MCF 10A (cell line): ENCODE measurements at regions of chr14 and their contacts with region 1.

Region 1: DNA sequence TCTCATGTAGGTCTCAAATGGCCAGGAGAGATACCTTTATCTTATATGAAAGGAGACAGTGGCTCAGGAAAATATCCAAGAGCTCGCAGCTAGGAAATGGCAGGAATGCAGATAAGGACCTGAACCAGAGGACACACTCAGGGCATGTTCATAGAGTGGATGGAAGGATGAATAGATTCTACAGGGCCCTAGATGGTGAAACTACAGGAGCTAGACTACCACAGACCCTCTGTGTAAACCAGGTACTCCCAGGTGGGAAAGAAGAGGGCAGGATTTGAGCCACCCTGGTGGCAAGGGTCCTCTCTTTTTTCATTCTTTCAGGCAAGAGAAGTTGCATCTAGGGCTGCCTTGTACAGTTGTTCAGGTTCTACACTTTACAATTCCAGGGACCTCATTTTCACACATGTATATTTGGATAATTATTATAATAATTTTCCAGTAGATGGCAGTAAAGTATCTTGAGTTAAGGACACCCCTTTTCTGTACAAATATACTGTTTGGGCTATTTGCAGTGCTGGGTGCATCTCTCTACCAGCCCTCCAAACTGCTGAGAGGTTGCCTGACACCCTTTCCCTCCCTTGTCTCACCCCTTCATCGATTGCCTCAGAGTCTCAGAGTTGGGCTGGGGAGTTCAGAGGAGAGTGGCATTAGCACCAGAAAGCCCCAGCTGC is 10.5 kb upstream of the ZDHHC22 start:
- DNase-seq: peak; percentile 31
- H3K4me3 Mint-ChIP-seq: no peak overlapping the region
- H3K27ac Mint-ChIP-seq: no peak overlapping the region
- H3K4me1 Mint-ChIP-seq: peaks cover 5% of the 10 kb centered on the region
- H3K27me3 Mint-ChIP-seq: peaks cover 4% of the 10 kb centered on the region
- CTCF ChIP-seq: peak; percentile 32

Region 2: DNA sequence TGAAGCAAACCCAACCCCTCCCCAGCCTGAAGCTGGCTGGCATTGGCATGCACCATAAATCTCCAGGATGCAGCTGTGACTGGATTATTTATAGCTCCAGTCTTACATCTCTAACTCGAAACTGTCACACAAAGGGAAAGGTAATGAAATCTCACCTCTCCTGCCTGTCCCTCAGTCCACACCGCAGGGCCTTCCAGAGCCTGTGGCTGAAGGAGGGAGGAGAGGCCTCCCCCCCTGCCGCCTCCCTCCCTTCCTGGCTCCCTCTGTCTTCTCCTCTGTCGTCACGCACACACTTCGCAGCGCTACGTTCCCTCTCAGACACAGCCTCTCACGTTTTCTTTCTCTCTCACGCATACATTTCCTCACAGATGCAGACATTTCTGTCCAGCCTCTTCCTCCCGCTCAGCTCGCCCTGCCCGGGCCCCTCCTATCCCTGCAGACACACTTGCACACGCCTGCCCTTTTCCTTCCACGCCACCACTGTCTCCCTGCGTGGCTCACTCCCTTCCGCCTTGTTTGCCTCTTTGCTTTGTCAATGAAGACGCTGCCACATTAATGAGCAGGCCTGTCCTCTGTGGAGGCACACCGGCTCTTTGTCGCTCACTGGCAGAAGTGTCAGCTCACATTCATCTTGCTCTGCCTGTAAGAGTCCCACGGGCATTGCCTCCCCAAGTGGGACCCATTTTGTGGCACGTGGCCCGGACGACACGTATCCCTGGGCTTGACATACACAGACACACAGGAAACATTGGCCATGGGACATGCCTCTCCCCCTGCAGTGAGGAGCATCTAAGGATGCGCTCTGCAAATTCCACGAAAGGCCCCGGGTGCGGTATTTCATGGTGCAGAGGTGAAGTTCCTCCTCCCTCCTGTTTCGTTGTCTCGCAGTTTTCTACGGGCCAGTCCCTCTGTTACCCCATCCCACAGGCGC is 151.4 kb before region 1 on chr14:
- CTCF ChIA-PET with region 1: no interaction called
- POLR2A ChIA-PET with region 1: no interaction called
- intact Hi-C with region 1: no loop called
- DNase-seq: no peak
- H3K4me3 Mint-ChIP-seq: no peak overlapping the region
- H3K27ac Mint-ChIP-seq: no peak overlapping the region
- H3K4me1 Mint-ChIP-seq: peaks cover 8% of the 10 kb centered on the region
- H3K27me3 Mint-ChIP-seq: no peaks in the 10 kb centered on the region
- CTCF ChIP-seq: no peak

Region 3: GRCh38 chr14:77133720-77134338 is 18.2 kb before region 1 on chr14:
- CTCF ChIA-PET with region 1: interaction called, 57 read pairs
- POLR2A ChIA-PET with region 1: no interaction called
- intact Hi-C with region 1: no loop called
- DNase-seq: peak; percentile 72
- H3K4me3 Mint-ChIP-seq: no peak overlapping the region
- H3K27ac Mint-ChIP-seq: no peak overlapping the region
- H3K4me1 Mint-ChIP-seq: peaks cover 5% of the 10 kb centered on the region
- H3K27me3 Mint-ChIP-seq: peaks cover 64% of the 10 kb centered on the region
- CTCF ChIP-seq: no peak

Region 4: GRCh38 chr14:77181603-77182437 is 29.8 kb after region 1 on chr14 and contains the start of gene TMEM63C:
- CTCF ChIA-PET with region 1: interaction called, 25 read pairs
- POLR2A ChIA-PET with region 1: no interaction called
- intact Hi-C with region 1: no loop called
- DNase-seq: peak; percentile 83
- H3K4me3 Mint-ChIP-seq: peak within 1 kb of the TSS; percentile 76
- H3K27ac Mint-ChIP-seq: no peak within 1 kb of the TSS
- H3K4me1 Mint-ChIP-seq: peaks cover 28% of the 10 kb centered on the region
- H3K27me3 Mint-ChIP-seq: no peaks in the 10 kb centered on the region
- CTCF ChIP-seq: no peak
- total RNA-seq, gene TMEM63C: 5.1 and 9.3 TPM in 2 replicates

Region 5: GRCh38 chr14:77301103-77301502 is 149.1 kb after region 1 on chr14:
- CTCF ChIA-PET with region 1: interaction called, 50 read pairs
- POLR2A ChIA-PET with region 1: interaction called, 5 read pairs
- intact Hi-C with region 1: no loop called
- DNase-seq: peak; percentile 75
- H3K4me3 Mint-ChIP-seq: no peak overlapping the region
- H3K27ac Mint-ChIP-seq: no peak overlapping the region
- H3K4me1 Mint-ChIP-seq: peaks cover 24% of the 10 kb centered on the region
- H3K27me3 Mint-ChIP-seq: no peaks in the 10 kb centered on the region
- CTCF ChIP-seq: peak; percentile 83

Region 6: DNA sequence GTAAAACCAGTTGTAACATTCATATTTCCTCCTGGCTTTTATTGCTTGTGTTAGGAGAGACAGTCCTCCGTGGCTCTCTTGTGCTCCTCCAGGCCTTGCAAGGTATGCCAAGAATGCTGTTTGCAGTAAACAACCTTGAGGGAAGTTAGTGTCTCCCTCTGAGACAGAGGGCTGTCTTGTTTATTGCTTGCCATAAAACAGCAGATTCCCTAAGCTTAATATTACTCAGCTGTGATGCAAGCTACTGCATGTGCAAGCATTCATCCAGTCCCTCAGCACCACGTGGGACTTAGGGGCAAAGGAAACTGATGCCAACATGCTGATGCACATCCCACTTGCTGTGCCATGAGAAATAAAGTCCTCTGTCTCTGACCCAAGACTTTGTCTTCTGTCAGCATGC is 162.0 kb after region 1 on chr14:
- CTCF ChIA-PET with region 1: interaction called, 153 read pairs
- POLR2A ChIA-PET with region 1: interaction called, 8 read pairs
- intact Hi-C with region 1: loop called (anchors 1 kb)
- DNase-seq: peak; percentile 78
- H3K4me3 Mint-ChIP-seq: no peak overlapping the region
- H3K27ac Mint-ChIP-seq: peak overlapping the region; percentile 96
- H3K4me1 Mint-ChIP-seq: peaks cover 57% of the 10 kb centered on the region
- H3K27me3 Mint-ChIP-seq: no peaks in the 10 kb centered on the region
- CTCF ChIP-seq: no peak

Region 7: DNA sequence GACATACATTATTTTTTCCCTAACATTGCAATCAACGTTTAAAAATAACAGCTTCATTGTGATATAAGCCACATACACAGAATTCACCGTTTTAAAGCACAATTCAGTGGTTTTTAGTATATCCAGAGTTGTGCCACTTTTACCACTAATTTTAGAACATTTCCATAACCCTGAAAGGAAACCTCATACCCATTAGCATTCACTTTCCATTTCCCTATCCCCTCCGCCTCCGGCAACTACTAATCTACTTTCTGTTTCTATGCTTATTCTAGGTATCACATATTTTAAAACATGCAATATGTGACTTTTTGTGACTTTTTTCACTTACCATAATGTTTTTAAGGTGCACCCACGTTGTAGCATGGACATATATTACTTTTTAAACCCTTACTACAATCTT is 402.2 kb after region 1 on chr14:
- CTCF ChIA-PET with region 1: interaction called, 7 read pairs
- POLR2A ChIA-PET with region 1: no interaction called
- intact Hi-C with region 1: loop called (anchors 5 kb)
- DNase-seq: no peak
- H3K4me3 Mint-ChIP-seq: no peak overlapping the region
- H3K27ac Mint-ChIP-seq: no peak overlapping the region
- H3K4me1 Mint-ChIP-seq: no peaks in the 10 kb centered on the region
- H3K27me3 Mint-ChIP-seq: no peaks in the 10 kb centered on the region
- CTCF ChIP-seq: no peak